Activated naive CD4-positive, alpha-beta T cell treated with anti-CD3 and anti-CD28 coated beads, Interleukin-2, amount 10 ng/mL, durations not matched to agents 7 days and 5 days (primary cell): ENCODE measurements at regions of chr17 and their contacts with region 1.

Region 1: GRCh38 chr17:20226814-20227482 is 217.8 kb downstream of the SPECC1 start:
- DNase-seq: peak; percentile 89
- H3K4me3 Mint-ChIP-seq: no peak overlapping the region
- H3K27ac Mint-ChIP-seq: no peak overlapping the region
- H3K4me1 Mint-ChIP-seq: peaks cover 21% of the 10 kb centered on the region
- H3K27me3 Mint-ChIP-seq: no peaks in the 10 kb centered on the region

Region 2: DNA sequence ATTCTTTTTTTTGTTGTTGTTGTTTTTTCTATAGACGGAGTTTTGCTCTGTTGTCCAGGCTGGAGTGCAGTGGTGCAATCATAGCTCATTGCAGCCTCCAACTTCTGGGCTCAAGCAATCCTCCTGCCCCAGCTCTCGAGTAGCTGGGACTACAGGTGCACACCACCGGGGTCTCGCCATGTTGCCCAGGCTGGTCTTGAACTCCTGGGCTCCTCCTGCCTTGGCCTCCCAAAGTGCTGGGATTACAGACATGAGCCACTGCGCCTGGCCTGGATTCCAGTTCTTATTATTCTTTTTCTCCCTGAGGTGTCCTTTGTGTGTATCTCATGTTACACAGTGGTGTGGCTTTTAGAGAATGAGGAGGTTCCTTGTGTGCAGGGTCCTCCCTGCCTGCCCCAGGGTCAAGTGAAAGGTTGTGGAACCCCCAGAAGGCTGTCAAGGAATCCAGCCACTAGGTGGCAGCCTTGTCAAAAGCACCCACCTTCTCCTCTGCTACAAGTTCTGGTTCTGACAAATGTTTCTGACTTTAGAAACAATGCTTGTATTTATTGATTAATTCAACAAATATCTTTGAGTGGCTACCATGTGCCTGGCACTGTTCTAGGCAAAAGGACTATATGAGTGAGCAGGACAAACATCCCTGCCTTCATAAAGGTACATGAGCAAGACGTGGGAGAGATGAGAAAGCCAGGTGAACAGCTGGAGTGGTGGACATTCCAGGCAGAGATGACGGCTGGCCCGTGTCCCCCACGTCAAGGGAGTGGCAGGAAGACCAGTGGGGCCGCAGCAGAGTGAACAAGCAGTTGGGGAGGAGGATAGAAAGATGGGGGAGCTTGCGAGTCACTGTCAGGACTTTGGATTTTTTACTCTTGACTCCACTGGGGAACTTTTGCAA is 105.3 kb before region 1 on chr17:
- CTCF ChIA-PET with region 1: interaction called, 47 read pairs
- DNase-seq: peak; percentile 77
- H3K4me3 Mint-ChIP-seq: no peak overlapping the region
- H3K27ac Mint-ChIP-seq: no peak overlapping the region
- H3K4me1 Mint-ChIP-seq: no peaks in the 10 kb centered on the region
- H3K27me3 Mint-ChIP-seq: peaks cover 20% of the 10 kb centered on the region

Region 3: GRCh38 chr17:20244671-20245070 is 17.7 kb after region 1 on chr17:
- CTCF ChIA-PET with region 1: interaction called, 12 read pairs
- DNase-seq: no peak
- H3K4me3 Mint-ChIP-seq: no peak overlapping the region
- H3K27ac Mint-ChIP-seq: no peak overlapping the region
- H3K4me1 Mint-ChIP-seq: peaks cover 33% of the 10 kb centered on the region
- H3K27me3 Mint-ChIP-seq: no peaks in the 10 kb centered on the region

Region 4: GRCh38 chr17:20256144-20256543 is 29.2 kb after region 1 on chr17:
- CTCF ChIA-PET with region 1: no interaction called
- DNase-seq: no peak
- H3K4me3 Mint-ChIP-seq: no peak overlapping the region
- H3K27ac Mint-ChIP-seq: no peak overlapping the region
- H3K4me1 Mint-ChIP-seq: peaks cover 33% of the 10 kb centered on the region
- H3K27me3 Mint-ChIP-seq: no peaks in the 10 kb centered on the region

Region 5: GRCh38 chr17:20276421-20276820 is 49.5 kb after region 1 on chr17:
- CTCF ChIA-PET with region 1: interaction called, 19 read pairs
- DNase-seq: no peak
- H3K4me3 Mint-ChIP-seq: peak overlapping the region; percentile 37
- H3K27ac Mint-ChIP-seq: peak overlapping the region; percentile 82
- H3K4me1 Mint-ChIP-seq: peaks cover 87% of the 10 kb centered on the region
- H3K27me3 Mint-ChIP-seq: no peaks in the 10 kb centered on the region

Region 6: GRCh38 chr17:20315821-20316220 is 88.9 kb after region 1 on chr17:
- CTCF ChIA-PET with region 1: interaction called, 36 read pairs
- DNase-seq: no peak
- H3K4me3 Mint-ChIP-seq: no peak overlapping the region
- H3K27ac Mint-ChIP-seq: no peak overlapping the region
- H3K4me1 Mint-ChIP-seq: peaks cover 4% of the 10 kb centered on the region
- H3K27me3 Mint-ChIP-seq: peaks cover 9% of the 10 kb centered on the region